SK-N-SH (cell line): ENCODE measurements at regions of chrX and their contacts with region 1.

Region 1: DNA sequence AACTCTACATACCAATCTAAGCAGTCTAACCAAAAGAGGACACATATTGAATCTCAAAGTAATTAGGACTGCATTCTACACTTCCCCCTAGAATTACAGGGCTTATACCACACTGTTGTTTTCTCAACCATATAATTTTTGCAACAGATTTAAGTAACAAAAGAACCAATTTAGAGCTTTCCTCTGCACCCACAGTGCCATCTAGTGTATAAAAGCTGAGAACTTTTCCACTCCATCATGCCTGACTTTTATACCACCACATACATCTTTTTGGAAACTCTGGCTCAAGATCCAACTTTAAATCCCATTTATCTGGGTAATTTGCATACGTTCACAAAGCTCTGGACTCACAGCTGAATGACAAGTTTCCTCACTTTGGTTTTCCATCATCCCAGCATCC is 99.5 kb downstream of the EFHC2 start:
- DNase-seq: peak; percentile 6
- H3K4me3 ChIP-seq: no peak overlapping the region
- H3K27ac ChIP-seq: no peak overlapping the region
- H3K4me1 ChIP-seq: no peaks in the 10 kb centered on the region
- H3K27me3 ChIP-seq: no peaks in the 10 kb centered on the region; the same call in 1 of the 2 replicates
- CTCF ChIP-seq: peak; percentile 74
- EP300 ChIP-seq: no peak
- RAD21 ChIP-seq: peak; percentile 79

Region 2: GRCh38 chrX:43836435-43837184 is 407.4 kb before region 1 on chrX:
- CTCF ChIA-PET with region 1: interaction called, 16 read pairs
- POLR2A ChIA-PET with region 1: no interaction called
- DNase-seq: peak; percentile 12
- H3K4me3 ChIP-seq: no peak overlapping the region
- H3K27ac ChIP-seq: no peak overlapping the region
- H3K4me1 ChIP-seq: no peaks in the 10 kb centered on the region; a peak in 1 of 4 replicates
- H3K27me3 ChIP-seq: no peaks in the 10 kb centered on the region
- CTCF ChIP-seq: peak; percentile 81
- EP300 ChIP-seq: no peak
- RAD21 ChIP-seq: peak; percentile 74

Region 3: GRCh38 chrX:43958529-43958928 is 285.5 kb before region 1 on chrX:
- CTCF ChIA-PET with region 1: interaction called, 52 read pairs
- POLR2A ChIA-PET with region 1: no interaction called
- DNase-seq: peak; percentile 64
- H3K4me3 ChIP-seq: no peak overlapping the region
- H3K27ac ChIP-seq: no peak overlapping the region
- H3K4me1 ChIP-seq: no peaks in the 10 kb centered on the region; a peak in 1 of 4 replicates
- H3K27me3 ChIP-seq: no peaks in the 10 kb centered on the region
- CTCF ChIP-seq: peak; percentile 86
- EP300 ChIP-seq: no peak
- RAD21 ChIP-seq: peak; percentile 94